WTC11 (cell line): ENCODE measurements at regions of chr10 and their contacts with region 1.

Region 1: GRCh38 chr10:44343843-44344242 is 41.1 kb downstream of the CXCL12 start:
- DNase-seq: peak; percentile 41
- ATAC-seq: peak; percentile 70
- H3K4me3 Mint-ChIP-seq: no peak overlapping the region
- H3K27ac Mint-ChIP-seq: no peak overlapping the region
- H3K4me1 Mint-ChIP-seq: peaks cover 42% of the 10 kb centered on the region
- H3K27me3 Mint-ChIP-seq: no peaks in the 10 kb centered on the region; the same call in 1 of the 2 replicates
- CTCF ChIP-seq: no peak

Region 2: GRCh38 chr10:44362866-44363711 is 19.2 kb after region 1 on chr10:
- CTCF ChIA-PET with region 1: interaction called, 14 read pairs
- POLR2A ChIA-PET with region 1: interaction called, 3 read pairs
- DNase-seq: peak; percentile 50
- ATAC-seq: peak; percentile 79
- H3K4me3 Mint-ChIP-seq: no peak overlapping the region
- H3K27ac Mint-ChIP-seq: no peak overlapping the region
- H3K4me1 Mint-ChIP-seq: peaks cover 65% of the 10 kb centered on the region
- H3K27me3 Mint-ChIP-seq: no peaks in the 10 kb centered on the region; the same call in 1 of the 2 replicates
- CTCF ChIP-seq: no peak

Region 3: GRCh38 chr10:44370731-44371248 is 26.9 kb after region 1 on chr10:
- CTCF ChIA-PET with region 1: interaction called, 12 read pairs
- POLR2A ChIA-PET with region 1: interaction called, 5 read pairs
- DNase-seq: peak; percentile 64
- ATAC-seq: peak; percentile 88
- H3K4me3 Mint-ChIP-seq: peak overlapping the region; percentile 49
- H3K27ac Mint-ChIP-seq: peak overlapping the region; percentile 98
- H3K4me1 Mint-ChIP-seq: peaks cover 69% of the 10 kb centered on the region
- H3K27me3 Mint-ChIP-seq: no peaks in the 10 kb centered on the region
- CTCF ChIP-seq: no peak